ENCODE measurements at regions of chr3 and their contacts with region 1.

Region 1: GRCh38 chr3:72270072-72270681 is 485.2 kb upstream of the PROK2 start:
- DNase-seq: no peak
- ATAC-seq: no peak
- H3K4me3 Mint-ChIP-seq: peak overlapping the region; percentile 38
- H3K27ac Mint-ChIP-seq: no peak overlapping the region
- H3K4me1 Mint-ChIP-seq: peaks cover 94% of the 10 kb centered on the region
- H3K27me3 Mint-ChIP-seq: no peaks in the 10 kb centered on the region
- CTCF ChIP-seq: no peak

Region 2: DNA sequence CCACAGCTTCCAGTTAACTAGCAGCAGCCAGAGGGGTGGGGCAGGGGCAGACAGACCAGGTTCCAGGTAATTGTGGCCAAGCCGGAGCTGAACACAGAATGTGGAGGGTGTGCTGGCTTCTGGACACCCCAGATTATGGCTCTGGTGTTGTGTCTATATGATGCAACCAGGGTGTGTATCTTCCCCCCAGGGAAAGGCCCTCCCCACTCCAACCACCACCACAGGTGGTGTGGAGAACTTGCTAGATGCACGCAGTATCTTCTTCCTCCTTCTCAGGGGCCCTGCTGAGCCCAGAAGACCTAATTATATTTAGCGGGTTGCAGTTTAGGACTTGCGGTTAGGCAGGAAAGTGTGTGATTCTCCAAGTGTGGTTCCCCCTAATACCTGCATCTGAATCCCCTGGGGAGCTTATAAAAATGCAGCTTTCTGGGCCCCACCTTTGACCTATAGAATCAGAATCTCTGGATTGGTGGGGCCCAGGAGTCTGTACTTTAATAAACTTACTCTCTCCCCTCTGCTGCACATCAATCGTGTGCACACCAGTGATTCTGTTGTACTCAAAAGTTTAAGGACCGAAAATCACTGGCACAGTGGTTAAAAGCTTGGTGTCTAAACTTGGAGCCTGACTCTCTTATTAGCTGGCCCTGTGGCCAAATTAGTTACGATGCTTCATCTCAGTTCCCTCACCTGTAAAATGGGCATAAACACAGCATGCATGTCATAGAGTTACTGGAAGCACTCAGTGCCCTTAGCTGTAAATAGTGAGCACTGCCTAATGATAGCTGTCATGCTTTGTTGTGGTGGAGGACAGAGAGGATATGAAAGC is 106.2 kb before region 1 on chr3:
- CTCF ChIA-PET with region 1: no interaction called
- POLR2A ChIA-PET with region 1: interaction called, 3 read pairs
- intact Hi-C with region 1: loop called (anchors 5 kb)
- DNase-seq: peak; percentile 53
- ATAC-seq: peak; percentile 87
- H3K4me3 Mint-ChIP-seq: peak overlapping the region; percentile 64
- H3K27ac Mint-ChIP-seq: peak overlapping the region; percentile 81
- H3K4me1 Mint-ChIP-seq: peaks cover 52% of the 10 kb centered on the region
- H3K27me3 Mint-ChIP-seq: peaks cover 2% of the 10 kb centered on the region
- CTCF ChIP-seq: no peak

Region 3: GRCh38 chr3:72255791-72256559 is 14.2 kb before region 1 on chr3:
- CTCF ChIA-PET with region 1: no interaction called
- POLR2A ChIA-PET with region 1: interaction called, 3 read pairs
- intact Hi-C with region 1: loop called (anchors 2 kb)
- DNase-seq: no peak
- ATAC-seq: peak; percentile 47
- H3K4me3 Mint-ChIP-seq: no peak overlapping the region
- H3K27ac Mint-ChIP-seq: no peak overlapping the region
- H3K4me1 Mint-ChIP-seq: peaks cover 52% of the 10 kb centered on the region
- H3K27me3 Mint-ChIP-seq: peaks cover 12% of the 10 kb centered on the region
- CTCF ChIP-seq: no peak

Region 4: DNA sequence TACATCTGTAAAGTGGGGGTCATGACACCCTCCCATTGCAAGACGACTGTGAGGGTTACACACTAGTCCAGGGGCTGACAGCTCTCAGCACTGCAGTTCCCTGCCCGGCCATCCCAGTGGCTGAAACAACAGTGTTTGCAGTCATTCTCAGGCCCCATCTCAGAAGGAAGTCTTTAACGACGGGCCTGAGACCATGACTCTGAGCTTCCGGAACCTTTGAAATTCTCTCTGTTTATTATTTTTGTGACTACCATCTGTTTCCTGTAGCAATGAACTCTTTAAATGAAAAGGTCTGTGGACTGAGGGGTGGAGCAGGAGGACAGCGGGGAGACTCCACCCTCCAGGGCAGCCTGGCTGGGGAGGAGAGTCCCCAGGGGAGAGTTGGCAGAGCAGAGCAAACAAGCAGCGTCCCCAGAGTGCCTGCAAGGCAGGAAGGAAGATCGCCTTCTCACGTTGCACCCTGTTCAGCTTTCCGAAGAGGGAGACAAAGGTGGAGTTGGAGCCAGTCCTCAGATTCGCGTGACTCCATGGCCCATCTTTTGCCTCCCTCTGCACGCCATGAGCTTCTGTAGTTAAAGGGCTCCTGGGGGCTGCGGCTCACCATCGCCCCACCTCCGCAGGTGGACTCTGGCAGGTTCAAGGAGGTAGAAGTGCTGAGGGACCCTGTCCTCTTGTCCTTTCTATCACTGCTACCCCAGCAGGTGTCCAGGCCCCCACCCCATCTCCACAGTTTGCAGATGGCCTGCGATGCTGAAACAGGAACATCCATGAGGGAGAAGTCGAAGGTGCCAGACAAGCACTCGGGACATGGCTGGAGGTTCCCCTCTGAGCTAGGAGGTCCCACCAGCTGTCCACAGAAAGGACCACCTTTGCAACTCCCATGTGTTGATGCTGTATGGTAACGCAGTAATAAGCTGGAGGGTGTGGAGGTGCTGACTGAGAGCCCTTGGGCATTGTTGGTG is 40.5 kb after region 1 on chr3:
- CTCF ChIA-PET with region 1: no interaction called
- POLR2A ChIA-PET with region 1: interaction called, 4 read pairs
- intact Hi-C with region 1: loop called (anchors 1 kb)
- DNase-seq: peak; percentile 45
- ATAC-seq: peak; percentile 98
- H3K4me3 Mint-ChIP-seq: peak overlapping the region; percentile 74
- H3K27ac Mint-ChIP-seq: peak overlapping the region; percentile 76
- H3K4me1 Mint-ChIP-seq: peaks cover 47% of the 10 kb centered on the region
- H3K27me3 Mint-ChIP-seq: no peaks in the 10 kb centered on the region
- CTCF ChIP-seq: no peak

Region 5: DNA sequence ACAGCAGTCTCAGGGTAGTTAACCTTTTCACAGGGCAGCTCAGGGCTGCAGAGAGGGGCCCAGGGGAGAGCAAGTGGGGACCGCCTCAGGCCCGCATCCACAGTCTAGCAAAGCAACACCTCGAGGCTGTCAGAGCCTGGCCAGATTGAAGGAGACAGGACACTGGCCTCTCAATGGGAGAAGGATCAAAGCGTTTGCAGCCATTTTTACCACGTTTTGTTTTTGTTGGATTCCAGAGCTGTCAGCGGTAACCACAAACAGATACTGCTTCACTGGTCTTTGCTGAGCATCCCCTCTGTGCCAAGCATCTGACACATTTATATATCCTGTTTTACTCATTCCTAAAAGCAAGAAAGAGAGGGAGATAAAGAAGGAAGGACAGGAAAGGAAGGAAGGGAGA is 424.2 kb after region 1 on chr3:
- CTCF ChIA-PET with region 1: no interaction called
- POLR2A ChIA-PET with region 1: no interaction called
- intact Hi-C with region 1: no loop called
- DNase-seq: no peak
- ATAC-seq: no peak
- H3K4me3 Mint-ChIP-seq: no peak overlapping the region
- H3K27ac Mint-ChIP-seq: no peak overlapping the region
- H3K4me1 Mint-ChIP-seq: no peaks in the 10 kb centered on the region
- H3K27me3 Mint-ChIP-seq: no peaks in the 10 kb centered on the region
- CTCF ChIP-seq: no peak

Measured in activated B cell treated with CpG ODN at 0.5 μM for 24 hours (primary cell).